ENCODE measurements at regions of chr15 and their contacts with region 1.

Region 1: DNA sequence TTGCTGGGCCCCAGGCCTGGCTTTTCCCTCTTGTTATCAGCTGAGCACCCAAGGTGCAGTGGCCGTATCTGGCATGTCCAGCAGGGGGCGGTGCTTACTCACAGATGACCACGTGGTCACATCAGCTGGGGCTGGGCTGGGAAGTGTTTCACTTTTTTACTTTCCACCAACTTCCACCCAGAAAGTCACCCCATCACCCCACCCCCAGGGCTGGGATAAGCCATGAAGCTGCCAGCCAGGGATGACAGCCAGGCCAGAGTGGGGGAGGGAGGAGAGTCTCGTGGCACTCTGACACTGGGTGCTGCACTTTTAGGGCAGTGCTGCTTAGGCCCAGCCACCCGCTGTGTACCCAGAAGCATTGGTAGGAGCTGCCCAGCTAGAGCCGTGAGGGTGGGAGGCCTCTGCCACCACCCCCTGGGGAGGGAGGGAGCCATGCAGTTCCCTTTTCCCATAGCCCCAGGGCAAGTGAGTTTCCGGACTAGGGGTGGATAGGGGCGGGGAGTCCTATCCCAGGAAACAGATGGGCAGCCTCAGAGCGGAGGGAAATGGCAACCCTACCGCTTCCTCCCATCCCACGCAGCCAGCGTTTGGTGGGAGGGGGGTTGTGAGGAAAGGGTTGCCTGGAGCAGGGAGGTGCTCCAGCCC is 6.1 kb downstream of the PPCDC start:
- DNase-seq: peak; percentile 31
- H3K4me3 ChIP-seq: peak overlapping the region; percentile 21
- CTCF ChIP-seq: peak; percentile 94

Region 2: GRCh38 chr15:75042730-75043508 is 13.4 kb after region 1 on chr15:
- CTCF ChIA-PET with region 1: interaction called, 38 read pairs
- POLR2A ChIA-PET with region 1: interaction called, 4 read pairs
- DNase-seq: no peak
- H3K4me3 ChIP-seq: no peak overlapping the region
- CTCF ChIP-seq: peak; percentile 43

Region 3: GRCh38 chr15:75307778-75308391 is 278.4 kb after region 1 on chr15:
- CTCF ChIA-PET with region 1: interaction called, 16 read pairs
- POLR2A ChIA-PET with region 1: no interaction called
- DNase-seq: no peak
- H3K4me3 ChIP-seq: no peak overlapping the region
- CTCF ChIP-seq: peak; percentile 37

Measured in AG04449 (cell line).